CD4-positive, alpha-beta memory T cell (primary cell): ENCODE measurements at regions of chr19 and their contacts with region 1.

Region 1: DNA sequence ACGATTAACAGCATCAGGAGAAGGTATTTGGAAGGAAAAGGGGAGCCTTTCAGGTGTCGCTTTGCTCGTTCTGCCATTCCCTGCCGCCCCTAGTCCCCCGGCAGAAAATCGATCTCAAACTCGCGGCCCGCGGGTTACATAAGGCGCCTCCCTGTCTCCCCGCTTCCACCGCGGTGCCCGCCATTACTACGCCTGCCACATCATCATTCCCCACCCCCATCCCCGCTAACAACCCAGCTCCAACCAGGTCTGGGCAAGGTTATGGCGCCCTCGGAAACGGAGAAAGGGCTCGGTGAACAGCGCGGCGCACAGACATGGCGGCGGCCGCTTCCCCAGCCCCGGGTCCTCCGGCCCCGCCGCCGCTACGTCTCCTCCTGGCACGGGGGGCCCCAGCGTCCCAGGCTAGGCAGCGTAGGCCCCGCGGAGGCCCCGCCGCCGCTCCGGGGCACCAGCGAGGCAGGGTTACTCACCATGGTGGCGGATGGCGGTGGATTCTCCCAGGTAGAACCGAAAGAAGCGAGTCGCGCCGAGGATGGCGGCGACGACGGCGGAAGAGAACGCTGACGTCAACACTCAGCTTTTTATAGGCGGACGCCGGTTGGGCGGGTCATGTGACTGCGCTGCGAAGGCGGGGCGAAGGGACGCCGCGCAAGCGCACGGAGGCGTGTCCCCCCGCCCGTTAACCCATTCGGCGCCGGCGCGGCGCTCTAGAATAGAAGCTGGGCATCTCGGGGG is at the start of gene EEF2:
- DNase-seq: peak; percentile 91 to 95 (median 94)
- H3K4me3 ChIP-seq: peak within 1 kb of the TSS; percentile 67 to 93
- H3K4me3 Mint-ChIP-seq: peak within 1 kb of the TSS; percentile 96 to 98 (median 97)
- H3K27ac ChIP-seq: peak within 1 kb of the TSS; percentile 91
- H3K27ac Mint-ChIP-seq: peak within 1 kb of the TSS; percentile 94 to 99 (median 97)
- H3K4me1 ChIP-seq: peaks cover 55% of the 10 kb centered on the region
- H3K4me1 Mint-ChIP-seq: peaks cover 20 to 61% (median 41%) of the 10 kb centered on the region in 4 donors
- H3K27me3 ChIP-seq: no peaks in the 10 kb centered on the region
- H3K27me3 Mint-ChIP-seq: no peaks in the 10 kb centered on the region
- total RNA-seq, gene EEF2: 2,286 to 2,389 TPM

Region 2: GRCh38 chr19:3862826-3863500 is 122.1 kb before region 1 on chr19:
- CTCF ChIA-PET with region 1: no interaction called
- POLR2A ChIA-PET with region 1: no interaction called
- intact Hi-C with region 1: no loop called
- DNase-seq: no peak
- H3K4me3 ChIP-seq: no peak overlapping the region
- H3K4me3 Mint-ChIP-seq: no peak overlapping the region
- H3K27ac ChIP-seq: no peak overlapping the region
- H3K27ac Mint-ChIP-seq: no peak overlapping the region
- H3K4me1 ChIP-seq: no peaks in the 10 kb centered on the region
- H3K4me1 Mint-ChIP-seq: peaks cover 0 to 4% (median 0%) of the 10 kb centered on the region in 4 donors
- H3K27me3 ChIP-seq: peaks cover 9% of the 10 kb centered on the region
- H3K27me3 Mint-ChIP-seq: peaks cover 18 to 22% of the 10 kb centered on the region in 2 donors

Region 3: DNA sequence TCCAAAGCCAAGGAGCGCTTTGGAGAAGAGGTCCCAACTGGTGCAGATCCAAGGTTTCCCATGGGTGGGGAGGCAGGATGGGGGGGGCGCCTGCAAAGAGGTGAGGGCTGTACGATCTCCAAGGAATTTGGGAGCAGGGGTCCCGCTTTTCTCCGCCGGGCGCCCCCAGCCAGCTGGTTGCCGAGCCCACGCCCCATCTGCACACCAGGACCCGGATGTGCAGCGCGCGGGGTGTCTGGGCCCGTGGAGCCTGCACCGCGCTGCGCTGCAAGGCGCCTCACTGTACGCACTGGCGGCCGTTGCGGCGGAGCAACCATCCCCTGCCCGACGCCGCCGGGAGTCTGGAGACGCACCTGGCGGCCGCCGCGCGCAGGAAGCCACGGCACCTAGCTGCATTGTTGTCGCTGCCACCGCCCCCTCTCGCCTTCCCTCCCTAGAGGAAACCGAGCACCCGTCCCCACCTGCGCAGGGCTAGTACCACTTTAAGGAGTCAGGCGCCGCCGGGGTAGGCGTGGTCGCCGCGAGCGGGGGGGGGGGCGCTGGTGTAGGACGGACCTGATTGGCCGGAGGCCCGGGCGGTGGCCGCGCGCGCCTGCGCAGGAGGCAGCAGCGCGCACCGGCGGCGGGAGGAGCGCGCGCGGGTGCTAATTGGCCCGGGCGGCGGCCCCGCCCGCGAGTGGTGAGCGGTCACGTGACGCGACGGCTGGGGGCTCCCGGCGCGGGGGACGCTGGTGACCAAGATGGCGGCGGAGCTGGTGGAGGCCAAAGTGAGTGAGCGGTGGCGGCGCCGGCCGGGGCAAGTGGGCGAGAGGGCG is 22.2 kb after region 1 on chr19 and contains the start of gene PIAS4:
- CTCF ChIA-PET with region 1: interaction called, 31 read pairs
- POLR2A ChIA-PET with region 1: interaction called, 41 read pairs
- intact Hi-C with region 1: loop called (anchors 1 kb)
- DNase-seq: peak; percentile 95 to 97 (median 95)
- H3K4me3 ChIP-seq: peak within 1 kb of the TSS; percentile 47 to 73
- H3K4me3 Mint-ChIP-seq: peak within 1 kb of the TSS; percentile 83 to 92 (median 89)
- H3K27ac ChIP-seq: peak within 1 kb of the TSS; percentile 63
- H3K27ac Mint-ChIP-seq: peak within 1 kb of the TSS; percentile 81 to 91 (median 86)
- H3K4me1 ChIP-seq: peaks cover 42% of the 10 kb centered on the region
- H3K4me1 Mint-ChIP-seq: peaks cover 11 to 33% (median 18%) of the 10 kb centered on the region in 4 donors
- H3K27me3 ChIP-seq: no peaks in the 10 kb centered on the region
- H3K27me3 Mint-ChIP-seq: no peaks in the 10 kb centered on the region
- total RNA-seq, gene PIAS4: 38.6 to 42.6 TPM

Region 4: DNA sequence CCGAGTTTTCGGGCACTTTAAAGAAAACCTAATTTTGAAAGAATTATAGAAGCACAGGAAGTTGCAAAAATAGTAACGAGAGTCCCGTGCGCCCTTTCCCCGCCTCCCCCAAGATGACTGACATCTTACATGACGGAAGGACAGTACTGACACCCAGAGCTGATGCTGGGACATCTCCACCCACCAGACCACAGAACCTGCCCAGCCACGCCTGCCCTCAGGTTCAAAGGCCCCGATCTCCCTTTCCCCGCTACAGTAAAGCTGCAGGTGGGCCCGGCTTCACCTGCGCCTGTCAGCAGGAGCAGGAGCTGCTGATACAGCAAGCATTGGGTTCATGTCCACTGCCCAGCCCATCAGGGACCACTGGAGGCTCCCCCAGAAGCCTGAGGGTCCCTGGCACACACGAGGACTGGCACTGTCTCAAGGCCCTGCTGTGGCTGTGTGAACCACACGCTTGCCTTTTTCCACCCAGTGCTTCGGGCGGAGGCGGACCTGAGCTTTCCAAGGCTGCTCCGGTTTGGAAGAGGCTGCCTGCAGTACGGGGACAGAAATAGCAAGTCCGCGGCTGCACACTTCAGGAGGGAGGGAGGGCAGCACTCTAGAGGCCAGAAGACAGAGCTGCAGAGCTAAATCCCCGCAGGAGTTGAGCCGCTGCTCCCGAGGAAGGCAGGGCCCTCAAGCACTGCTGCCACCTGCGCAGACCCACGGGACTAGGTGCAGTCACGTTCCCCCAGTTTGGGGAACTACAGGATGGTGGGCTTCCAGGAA is 130.2 kb after region 1 on chr19:
- CTCF ChIA-PET with region 1: interaction called, 16 read pairs
- POLR2A ChIA-PET with region 1: interaction called, 8 read pairs
- intact Hi-C with region 1: loop called (anchors 2 kb)
- DNase-seq: peak; percentile 71 to 80 (median 77)
- H3K4me3 ChIP-seq: peak overlapping the region in 1 of 2 donors; percentile 36
- H3K4me3 Mint-ChIP-seq: peak overlapping the region; percentile 5 to 72 (median 64)
- H3K27ac ChIP-seq: peak overlapping the region; percentile 49
- H3K27ac Mint-ChIP-seq: peak overlapping the region; percentile 65 to 92 (median 91)
- H3K4me1 ChIP-seq: peaks cover 34% of the 10 kb centered on the region
- H3K4me1 Mint-ChIP-seq: peaks cover 11 to 42% (median 20%) of the 10 kb centered on the region in 4 donors
- H3K27me3 ChIP-seq: no peaks in the 10 kb centered on the region
- H3K27me3 Mint-ChIP-seq: no peaks in the 10 kb centered on the region

Region 5: GRCh38 chr19:4182084-4182810 is 197.2 kb after region 1 on chr19 and contains the starts of genes ANKRD24 and SIRT6:
- CTCF ChIA-PET with region 1: interaction called, 5 read pairs
- POLR2A ChIA-PET with region 1: interaction called, 5 read pairs
- intact Hi-C with region 1: loop called (anchors 1 kb)
- DNase-seq: peak; percentile 95 to 96 (median 96)
- H3K4me3 ChIP-seq: peak within 1 kb of the TSS; percentile 91 to 97
- H3K4me3 Mint-ChIP-seq: peak within 1 kb of the TSS; percentile 94 to 99 (median 96)
- H3K27ac ChIP-seq: peak within 1 kb of the TSS; percentile 81
- H3K27ac Mint-ChIP-seq: peak within 1 kb of the TSS; percentile 92 to 100 (median 96)
- H3K4me1 ChIP-seq: peaks cover 27% of the 10 kb centered on the region
- H3K4me1 Mint-ChIP-seq: peaks cover 30 to 41% (median 33%) of the 10 kb centered on the region in 4 donors
- H3K27me3 ChIP-seq: no peaks in the 10 kb centered on the region
- H3K27me3 Mint-ChIP-seq: peaks cover 0 to 3% of the 10 kb centered on the region in 2 donors
- total RNA-seq, gene ANKRD24: 1.9 to 2.9 TPM
- total RNA-seq, gene SIRT6: 26.8 to 27.0 TPM

Region 6: GRCh38 chr19:4208385-4209094 is 223.5 kb after region 1 on chr19:
- CTCF ChIA-PET with region 1: interaction called, 16 read pairs
- POLR2A ChIA-PET with region 1: interaction called, 4 read pairs
- intact Hi-C with region 1: loop called (anchors 1 kb)
- DNase-seq: no peak
- H3K4me3 ChIP-seq: no peak overlapping the region
- H3K4me3 Mint-ChIP-seq: no peak overlapping the region
- H3K27ac ChIP-seq: no peak overlapping the region
- H3K27ac Mint-ChIP-seq: no peak overlapping the region
- H3K4me1 ChIP-seq: no peaks in the 10 kb centered on the region
- H3K4me1 Mint-ChIP-seq: peaks cover 3 to 5% (median 3%) of the 10 kb centered on the region in 4 donors
- H3K27me3 ChIP-seq: no peaks in the 10 kb centered on the region
- H3K27me3 Mint-ChIP-seq: peaks cover 0 to 5% of the 10 kb centered on the region in 2 donors

Region 7: DNA sequence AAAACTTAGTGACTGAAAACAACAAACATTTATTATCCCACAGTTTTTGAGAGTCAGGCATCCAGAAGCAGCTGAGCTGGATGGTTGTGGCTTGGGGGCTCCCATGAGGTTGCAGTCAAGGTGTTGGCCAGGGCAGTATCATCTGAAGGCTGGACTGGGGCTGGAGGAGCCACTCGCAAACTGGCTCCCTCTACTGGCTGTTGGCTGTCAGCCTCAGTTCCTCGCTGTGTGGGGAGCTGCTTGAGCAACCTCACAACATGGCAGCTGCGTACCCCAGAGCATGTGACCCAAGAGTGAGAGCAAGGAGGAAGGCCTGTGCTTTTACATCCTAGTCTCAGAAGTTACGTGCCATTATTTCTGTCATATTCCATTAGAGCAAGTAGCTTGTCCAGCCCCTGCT is 271.5 kb after region 1 on chr19:
- CTCF ChIA-PET with region 1: no interaction called
- POLR2A ChIA-PET with region 1: no interaction called
- intact Hi-C with region 1: no loop called
- DNase-seq: no peak
- H3K4me3 ChIP-seq: no peak overlapping the region
- H3K4me3 Mint-ChIP-seq: no peak overlapping the region
- H3K27ac ChIP-seq: no peak overlapping the region
- H3K27ac Mint-ChIP-seq: peak overlapping the region in 1 of 7 donors; percentile 38
- H3K4me1 ChIP-seq: no peaks in the 10 kb centered on the region
- H3K4me1 Mint-ChIP-seq: peaks cover 0 to 4% (median 3%) of the 10 kb centered on the region in 4 donors
- H3K27me3 ChIP-seq: no peaks in the 10 kb centered on the region
- H3K27me3 Mint-ChIP-seq: no peaks in the 10 kb centered on the region